H1 (cell line): ENCODE measurements at regions of chr17 and their contacts with region 1.

Region 1: DNA sequence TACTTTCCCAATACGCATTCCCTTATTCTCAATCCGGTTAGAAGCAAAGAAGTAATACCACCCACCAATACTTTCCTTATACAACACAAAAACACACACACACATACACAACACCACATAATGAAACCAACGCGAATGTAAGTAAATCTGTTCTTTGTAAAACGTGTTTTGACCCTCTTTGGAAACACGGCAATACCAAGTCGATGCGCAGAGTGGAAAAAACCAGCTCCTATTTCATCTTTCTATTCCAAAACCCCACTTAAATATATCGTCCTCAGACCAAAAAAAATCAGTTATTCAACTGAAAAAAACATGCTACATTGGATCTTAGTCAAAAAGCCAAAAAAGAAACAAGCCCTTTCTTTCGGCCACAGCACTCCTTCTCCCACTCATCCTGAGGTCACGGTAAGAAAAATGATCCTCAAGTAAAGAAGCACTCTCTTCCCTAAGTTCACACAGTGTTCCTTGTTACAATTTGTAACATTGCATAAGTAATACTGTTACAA is 31.0 kb upstream of the ARL4D start:
- DNase-seq: peak in 1 of 2 experiments; percentile 60
- H3K4me3 ChIP-seq: peak overlapping the region in 2 of 4 experiments; percentile 43 to 59; a peak in 5 of 8 replicates
- H3K27ac ChIP-seq: peak overlapping the region; percentile 99
- H3K4me1 ChIP-seq: peaks cover 5 to 12% (median 8%) of the 10 kb centered on the region in 4 experiments
- H3K27me3 ChIP-seq: no peaks in the 10 kb centered on the region; a peak in 1 of 7 replicates
- CTCF ChIP-seq: no peak
- EP300 ChIP-seq: no peak; a peak in 1 of 3 replicates
- POLR2A ChIP-seq: peak; percentile 99 to 100
- RAD21 ChIP-seq: 0 out of 4 replicates have a peak, but pooled peaks of 1 of the 2 experiments have one; percentile 1

Region 2: DNA sequence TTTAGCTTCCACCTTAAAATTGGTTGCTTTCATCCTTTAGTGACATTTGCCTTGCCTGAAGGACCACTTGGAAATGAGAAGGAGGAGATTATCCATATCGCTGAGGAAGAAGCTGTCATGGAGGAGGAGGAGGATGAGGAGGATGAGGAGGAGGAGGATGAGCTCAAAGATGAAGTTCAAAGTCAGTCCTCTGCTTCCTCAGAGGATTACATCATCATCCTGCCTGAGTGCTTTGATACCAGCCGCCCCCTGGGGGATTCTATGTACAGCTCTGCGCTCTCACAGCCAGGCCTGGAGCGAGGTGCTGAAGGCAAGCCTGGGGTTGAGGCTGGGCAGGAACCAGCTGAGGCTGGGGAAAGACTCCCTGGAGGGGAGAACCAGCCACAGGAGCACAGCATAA is 167.7 kb before region 1 on chr17:
- CTCF ChIA-PET with region 1: no interaction called
- POLR2A ChIA-PET with region 1: no interaction called
- DNase-seq: no peak
- H3K4me3 ChIP-seq: no peak overlapping the region
- H3K27ac ChIP-seq: no peak overlapping the region
- H3K4me1 ChIP-seq: no peaks in the 10 kb centered on the region
- H3K27me3 ChIP-seq: no peaks in the 10 kb centered on the region
- CTCF ChIP-seq: no peak
- EP300 ChIP-seq: no peak
- POLR2A ChIP-seq: no peak
- RAD21 ChIP-seq: no peak

Region 3: GRCh38 chr17:43316522-43317142 is 51.2 kb before region 1 on chr17:
- CTCF ChIA-PET with region 1: no interaction called
- POLR2A ChIA-PET with region 1: interaction called, 65 read pairs
- DNase-seq: no peak
- H3K4me3 ChIP-seq: no peak overlapping the region
- H3K27ac ChIP-seq: no peak overlapping the region
- H3K4me1 ChIP-seq: no peaks in the 10 kb centered on the region; a peak in 1 of 7 replicates
- H3K27me3 ChIP-seq: no peaks in the 10 kb centered on the region
- CTCF ChIP-seq: no peak
- EP300 ChIP-seq: no peak
- POLR2A ChIP-seq: no peak
- RAD21 ChIP-seq: no peak

Region 4: GRCh38 chr17:43330876-43331639 is 36.7 kb before region 1 on chr17:
- CTCF ChIA-PET with region 1: interaction called, 6 read pairs
- POLR2A ChIA-PET with region 1: interaction called, 39 read pairs
- DNase-seq: no peak
- H3K4me3 ChIP-seq: no peak overlapping the region
- H3K27ac ChIP-seq: no peak overlapping the region
- H3K4me1 ChIP-seq: peaks cover 0 to 2% (median 0%) of the 10 kb centered on the region in 4 experiments; a peak in 2 of 7 replicates
- H3K27me3 ChIP-seq: no peaks in the 10 kb centered on the region
- CTCF ChIP-seq: no peak
- EP300 ChIP-seq: no peak
- POLR2A ChIP-seq: no peak
- RAD21 ChIP-seq: peak in 1 of 2 experiments; percentile 22; a peak in 1 of 4 replicates

Region 5: DNA sequence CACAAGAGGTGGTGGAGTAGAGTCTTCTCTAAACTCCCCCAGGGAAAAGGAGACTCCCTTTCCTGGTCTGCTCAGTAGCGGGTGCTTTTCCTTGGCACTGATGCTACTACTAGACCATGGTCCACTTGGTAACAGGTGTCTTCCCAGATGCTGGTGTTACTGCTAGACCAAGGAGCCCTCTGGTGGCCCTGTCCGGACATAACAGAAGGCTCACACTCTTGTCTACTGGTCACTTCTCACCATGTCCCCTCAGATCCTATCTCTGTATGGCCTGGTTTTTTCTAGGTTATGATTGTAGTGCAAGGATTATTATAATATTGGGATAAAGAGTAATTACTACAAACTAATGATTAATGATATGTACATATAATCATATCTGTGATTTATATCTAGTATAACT is 18.6 kb before region 1 on chr17:
- CTCF ChIA-PET with region 1: interaction called, 4 read pairs
- POLR2A ChIA-PET with region 1: interaction called, 34 read pairs
- DNase-seq: no peak
- H3K4me3 ChIP-seq: no peak overlapping the region
- H3K27ac ChIP-seq: no peak overlapping the region
- H3K4me1 ChIP-seq: peaks cover 0 to 10% (median 1%) of the 10 kb centered on the region in 4 experiments; a peak in 3 of 7 replicates
- H3K27me3 ChIP-seq: no peaks in the 10 kb centered on the region
- CTCF ChIP-seq: peak in 2 of 3 experiments; percentile 29 to 47; a peak in 2 of 4 replicates
- EP300 ChIP-seq: no peak
- POLR2A ChIP-seq: no peak
- RAD21 ChIP-seq: peak; percentile 35 to 49; a peak in 3 of 4 replicates

Region 6: DNA sequence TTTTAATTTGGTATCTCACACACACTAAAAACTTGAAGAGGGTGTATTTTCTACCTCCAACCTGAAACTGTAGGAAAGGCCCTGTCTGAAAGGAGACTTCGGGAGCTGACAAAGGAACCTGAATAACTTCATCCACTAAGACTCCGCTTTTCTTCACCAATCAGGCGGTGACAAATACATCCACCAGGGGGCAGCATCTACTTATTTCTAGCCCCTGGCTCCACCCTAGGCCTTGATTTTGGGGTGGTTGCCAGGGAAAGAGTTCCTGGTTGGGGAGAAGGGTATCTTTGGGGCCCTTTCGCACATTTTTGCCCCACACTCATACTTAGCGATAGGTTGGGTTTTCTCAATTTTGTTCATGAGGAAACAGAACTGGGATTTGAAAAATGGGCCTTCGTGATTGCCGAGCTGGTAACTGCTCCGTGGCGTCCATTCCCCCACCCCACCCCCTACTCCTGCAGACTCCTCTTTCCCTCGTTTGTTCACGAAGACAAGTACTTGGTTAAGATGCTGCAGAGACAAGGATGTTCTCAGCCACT is 26.2 kb after region 1 on chr17:
- CTCF ChIA-PET with region 1: interaction called, 22 read pairs
- POLR2A ChIA-PET with region 1: interaction called, 184 read pairs
- DNase-seq: peak in 1 of 2 experiments; percentile 97
- H3K4me3 ChIP-seq: no peak overlapping the region
- H3K27ac ChIP-seq: no peak overlapping the region
- H3K4me1 ChIP-seq: peaks cover 0 to 3% (median 0%) of the 10 kb centered on the region in 4 experiments; a peak in 3 of 7 replicates
- H3K27me3 ChIP-seq: no peaks in the 10 kb centered on the region
- CTCF ChIP-seq: peak; percentile 56 to 91 (median 91)
- EP300 ChIP-seq: no peak
- POLR2A ChIP-seq: no peak
- RAD21 ChIP-seq: peak; percentile 97

Region 7: GRCh38 chr17:43412166-43412565 is 44.4 kb after region 1 on chr17:
- CTCF ChIA-PET with region 1: no interaction called
- POLR2A ChIA-PET with region 1: interaction called, 28 read pairs
- DNase-seq: no peak
- H3K4me3 ChIP-seq: no peak overlapping the region
- H3K27ac ChIP-seq: no peak overlapping the region
- H3K4me1 ChIP-seq: peaks cover 0 to 2% (median 0%) of the 10 kb centered on the region in 4 experiments; a peak in 2 of 7 replicates
- H3K27me3 ChIP-seq: no peaks in the 10 kb centered on the region
- CTCF ChIP-seq: no peak
- EP300 ChIP-seq: no peak
- POLR2A ChIP-seq: no peak
- RAD21 ChIP-seq: no peak

Region 8: DNA sequence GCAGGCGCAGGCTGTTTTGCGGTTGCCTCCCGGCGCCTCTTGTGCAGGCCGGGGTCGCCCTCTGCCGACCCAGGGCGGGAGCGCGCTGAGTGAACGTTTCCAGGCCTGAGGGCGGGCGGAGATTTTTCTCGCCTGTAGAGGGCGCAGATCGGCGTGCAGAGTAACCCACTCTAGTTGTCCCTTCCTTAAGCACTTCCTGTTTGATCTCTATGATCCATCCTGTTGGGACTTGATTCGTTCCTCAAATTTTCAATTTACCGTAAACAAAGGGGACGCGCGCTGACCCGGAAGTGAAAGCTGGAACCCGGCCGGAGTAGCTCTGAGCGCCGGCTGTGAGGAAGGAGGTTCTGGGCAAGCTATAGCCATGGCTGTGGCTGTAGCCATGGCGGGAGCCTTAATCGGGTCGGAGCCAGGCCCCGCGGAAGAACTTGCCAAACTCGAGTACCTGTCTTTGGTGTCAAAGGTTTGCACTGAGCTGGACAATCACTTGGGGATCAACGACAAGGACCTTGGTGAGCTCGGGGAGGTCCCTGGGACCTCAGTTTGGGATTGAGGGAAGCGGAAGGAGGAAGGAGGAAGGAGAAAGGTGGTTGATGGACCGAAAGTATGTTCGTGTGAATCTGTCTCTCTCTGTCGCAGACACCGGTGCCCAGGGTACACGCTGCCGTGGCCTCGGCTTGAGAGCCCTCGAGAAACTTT is 116.0 kb after region 1 on chr17 and contains the start of gene DHX8:
- CTCF ChIA-PET with region 1: interaction called, 41 read pairs
- POLR2A ChIA-PET with region 1: interaction called, 62 read pairs
- DNase-seq: peak; percentile 95 to 99
- H3K4me3 ChIP-seq: peak within 1 kb of the TSS; percentile 61 to 84 (median 78)
- H3K27ac ChIP-seq: peak within 1 kb of the TSS; percentile 79
- H3K4me1 ChIP-seq: peaks cover 0 to 6% (median under 1%) of the 10 kb centered on the region in 4 experiments; a peak in 4 of 7 replicates
- H3K27me3 ChIP-seq: no peaks in the 10 kb centered on the region
- CTCF ChIP-seq: peak; percentile 100
- EP300 ChIP-seq: peak in 1 of 2 experiments; percentile 68; a peak in 1 of 3 replicates
- POLR2A ChIP-seq: peak; percentile 77 to 94
- RAD21 ChIP-seq: peak; percentile 100
- total RNA-seq, gene DHX8: 57.0 and 59.4 TPM in 2 replicates

Region 9: GRCh38 chr17:43562679-43563599 is 195.1 kb after region 1 on chr17:
- CTCF ChIA-PET with region 1: no interaction called
- POLR2A ChIA-PET with region 1: no interaction called
- DNase-seq: no peak
- H3K4me3 ChIP-seq: peak overlapping the region in 2 of 4 experiments; percentile 14 to 43; a peak in 3 of 8 replicates
- H3K27ac ChIP-seq: no peak overlapping the region
- H3K4me1 ChIP-seq: peaks cover 13 to 24% (median 20%) of the 10 kb centered on the region in 4 experiments
- H3K27me3 ChIP-seq: peaks cover 0 to 3% (median 1%) of the 10 kb centered on the region in 4 experiments; a peak in 3 of 7 replicates
- CTCF ChIP-seq: no peak
- EP300 ChIP-seq: no peak
- POLR2A ChIP-seq: no peak
- RAD21 ChIP-seq: no peak

Region 10: DNA sequence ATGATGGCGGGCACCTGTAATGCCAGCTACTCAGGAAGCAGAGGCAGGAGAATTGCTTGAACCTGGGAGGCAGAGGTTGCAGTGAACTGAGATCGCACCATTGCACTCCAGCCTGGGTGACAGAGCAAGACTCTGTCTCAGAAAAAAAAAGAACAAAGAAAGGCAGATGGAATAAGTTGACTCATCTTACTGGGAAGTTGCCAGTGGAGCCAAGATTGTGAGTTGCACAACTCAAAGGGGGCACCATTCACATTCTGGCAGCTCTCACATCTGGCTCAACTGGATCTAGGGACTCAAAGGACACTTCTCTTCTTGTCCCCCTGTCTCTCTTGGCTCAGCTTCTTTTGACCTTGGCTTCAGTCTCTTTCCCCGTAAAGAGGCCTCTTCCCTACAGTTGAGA is 232.0 kb after region 1 on chr17:
- CTCF ChIA-PET with region 1: no interaction called
- POLR2A ChIA-PET with region 1: no interaction called
- DNase-seq: no peak
- H3K4me3 ChIP-seq: no peak overlapping the region
- H3K27ac ChIP-seq: no peak overlapping the region
- H3K4me1 ChIP-seq: no peaks in the 10 kb centered on the region; a peak in 3 of 7 replicates
- H3K27me3 ChIP-seq: no peaks in the 10 kb centered on the region
- CTCF ChIP-seq: no peak
- EP300 ChIP-seq: no peak
- POLR2A ChIP-seq: no peak
- RAD21 ChIP-seq: no peak